ENCODE measurements at regions of chr6 and their contacts with region 1.

Region 1: GRCh38 chr6:75284632-75285286 is at the start of gene TMEM30A:
- H3K4me3 ChIP-seq: peak within 1 kb of the TSS; percentile 97
- H3K27ac ChIP-seq: peak within 1 kb of the TSS; percentile 64
- H3K4me1 ChIP-seq: peaks cover 6% of the 10 kb centered on the region; the same call in 1 of the 2 replicates
- CTCF ChIP-seq: peak; percentile 66

Region 2: DNA sequence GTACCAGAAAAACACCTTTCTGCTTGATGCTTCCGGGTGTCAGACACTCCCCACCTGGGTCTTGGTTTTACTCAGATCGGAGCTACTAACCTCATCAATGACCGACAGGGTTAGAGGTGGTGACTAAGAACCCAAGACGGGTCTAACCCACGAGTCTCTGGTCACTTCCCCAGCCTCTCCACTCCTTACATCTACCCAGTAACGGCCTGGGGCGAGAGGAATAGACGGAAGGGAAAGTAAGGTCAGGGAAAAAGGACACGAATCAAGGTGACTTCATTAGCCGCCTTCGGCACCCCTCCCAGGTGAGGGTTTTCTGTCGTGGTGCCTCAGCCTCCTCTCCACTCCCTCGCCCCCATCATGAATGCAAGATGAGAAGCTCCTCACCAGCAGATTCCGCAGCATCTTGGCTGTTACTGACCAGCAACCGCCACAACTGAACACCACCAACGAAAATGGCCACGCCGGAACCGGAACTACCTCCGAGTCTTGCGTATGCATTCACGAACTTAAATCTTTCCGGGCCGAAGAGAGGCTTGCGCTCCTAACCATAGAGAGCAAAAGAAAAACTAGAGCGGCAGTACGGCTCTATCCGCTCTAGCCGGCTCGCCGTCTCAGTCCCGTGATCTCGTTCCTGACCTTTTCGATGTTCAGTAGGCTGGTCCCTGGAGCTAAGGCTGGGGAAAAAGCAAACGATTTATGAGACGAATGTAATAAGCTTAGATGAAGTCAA is 41.3 kb before region 1 on chr6 and contains the start of gene COX7A2:
- CTCF ChIA-PET with region 1: no interaction called
- POLR2A ChIA-PET with region 1: interaction called, 11 read pairs
- H3K4me3 ChIP-seq: peak within 1 kb of the TSS; percentile 64
- H3K27ac ChIP-seq: peak within 1 kb of the TSS; percentile 67
- H3K4me1 ChIP-seq: no peaks in the 10 kb centered on the region
- CTCF ChIP-seq: no peak

Measured in HEK293 (cell line).